ENCODE measurements at regions of chr1 and their contacts with region 1.

Region 1: DNA sequence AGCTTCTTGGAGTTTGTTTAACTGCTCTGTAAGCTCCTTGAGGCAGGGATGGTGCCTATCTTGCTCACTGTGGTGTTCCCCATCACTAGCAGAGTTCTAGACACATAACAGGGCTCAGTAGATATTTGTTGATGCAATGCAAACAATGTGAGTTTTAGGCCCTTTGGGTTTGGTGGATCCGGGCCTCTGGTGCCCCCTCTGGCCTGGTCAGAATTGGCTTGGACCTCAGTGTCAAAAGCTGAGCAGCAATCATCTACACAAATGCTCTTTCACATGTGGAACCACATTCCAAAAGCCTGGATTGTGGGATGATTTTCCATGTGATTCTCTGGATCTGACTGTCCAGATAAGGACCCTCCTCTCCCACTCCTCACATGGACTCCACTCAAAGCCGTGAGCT is 53.4 kb upstream of the BCAR3 start:
- DNase-seq: no peak
- H3K4me3 ChIP-seq: no peak overlapping the region
- CTCF ChIP-seq: peak; percentile 30

Region 2: DNA sequence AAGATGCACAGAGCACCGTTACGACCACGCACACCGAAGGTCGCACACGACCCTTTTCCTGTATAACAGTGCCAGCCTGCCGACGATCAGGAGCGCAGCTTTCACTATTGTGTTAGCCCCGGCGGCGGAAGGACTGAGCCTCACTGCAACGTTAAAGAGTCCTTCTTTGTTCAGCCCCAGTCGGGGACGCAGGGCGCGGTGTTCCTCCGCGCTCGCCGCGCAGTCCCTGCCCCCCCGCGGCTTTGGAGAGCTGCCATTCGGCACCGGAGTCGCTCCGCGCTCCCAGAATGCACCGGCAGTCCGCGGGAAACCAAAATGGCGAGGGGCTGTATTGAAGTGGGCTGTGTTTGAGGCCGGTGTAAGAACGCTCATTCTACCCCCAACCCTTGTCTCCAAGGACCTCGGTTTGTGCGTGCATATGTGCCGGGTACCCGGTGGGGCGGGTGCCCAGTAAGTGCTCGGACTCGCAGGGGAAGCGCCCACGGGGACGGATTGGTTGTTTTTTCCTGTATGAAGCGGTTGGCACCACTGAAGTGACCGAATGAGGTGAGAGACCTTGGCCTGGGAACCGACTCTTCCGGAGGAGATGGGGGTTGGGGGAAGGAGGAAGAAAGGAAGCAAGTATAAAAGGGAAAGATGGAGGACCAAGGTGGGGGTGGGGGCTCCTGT is 655.9 kb before region 1 on chr1 and contains the start of gene MTF2:
- CTCF ChIA-PET with region 1: no interaction called
- POLR2A ChIA-PET with region 1: no interaction called
- DNase-seq: peak; percentile 86
- H3K4me3 ChIP-seq: peak within 1 kb of the TSS; percentile 97
- CTCF ChIP-seq: no peak

Region 3: DNA sequence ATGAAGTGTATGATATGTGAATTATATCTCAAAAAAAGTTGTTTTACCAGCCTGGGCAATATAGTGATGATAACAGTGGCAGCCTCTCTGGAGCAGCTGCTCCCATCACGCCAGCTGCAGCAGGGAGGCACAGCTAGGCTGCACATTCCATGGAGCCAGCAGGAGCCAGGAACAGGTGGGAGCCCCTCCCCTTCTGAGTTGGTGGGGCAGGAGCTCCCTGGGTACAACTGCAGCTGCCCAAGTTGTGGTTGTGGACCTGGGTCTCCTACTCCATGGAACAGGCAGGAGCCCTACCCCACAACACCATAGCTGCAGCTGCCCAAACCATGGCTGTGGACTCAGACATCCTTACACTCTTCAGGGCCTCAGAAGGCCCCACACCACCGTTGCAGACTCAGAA is 308.8 kb before region 1 on chr1:
- CTCF ChIA-PET with region 1: no interaction called
- POLR2A ChIA-PET with region 1: no interaction called
- DNase-seq: no peak
- H3K4me3 ChIP-seq: no peak overlapping the region
- CTCF ChIP-seq: no peak

Region 4: DNA sequence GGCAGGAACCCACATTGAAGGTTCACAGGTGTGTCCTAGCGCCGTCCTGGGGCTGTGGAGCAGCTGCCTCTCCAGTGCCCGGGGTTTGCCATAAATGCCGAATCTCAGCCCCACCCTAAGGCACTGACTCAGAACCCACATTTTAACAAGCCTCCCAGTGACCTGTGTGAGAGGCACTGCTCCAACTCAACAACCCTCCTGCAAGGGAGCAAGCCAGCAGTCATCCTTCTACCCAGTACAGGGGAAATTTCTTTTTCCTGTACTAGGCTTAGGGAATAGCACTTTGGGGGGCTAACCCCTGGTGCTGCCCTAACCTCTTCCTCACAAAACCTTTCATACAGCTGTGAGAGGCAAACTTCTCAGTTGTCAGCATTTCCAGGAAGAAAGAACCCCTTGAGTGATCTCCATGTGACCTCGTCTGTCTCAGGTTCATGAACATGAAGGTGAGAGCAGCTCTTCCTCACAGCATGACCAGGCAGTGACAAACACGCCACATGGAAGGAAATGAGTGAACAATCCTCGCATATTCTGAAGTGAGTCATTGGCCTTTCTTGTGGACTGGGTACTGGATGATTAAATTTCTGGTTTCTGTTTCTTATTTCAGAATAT is 41.9 kb before region 1 on chr1:
- CTCF ChIA-PET with region 1: interaction called, 17 read pairs
- POLR2A ChIA-PET with region 1: interaction called, 5 read pairs
- DNase-seq: no peak
- H3K4me3 ChIP-seq: no peak overlapping the region; the same call in 1 of the 2 replicates
- CTCF ChIP-seq: no peak

Region 5: DNA sequence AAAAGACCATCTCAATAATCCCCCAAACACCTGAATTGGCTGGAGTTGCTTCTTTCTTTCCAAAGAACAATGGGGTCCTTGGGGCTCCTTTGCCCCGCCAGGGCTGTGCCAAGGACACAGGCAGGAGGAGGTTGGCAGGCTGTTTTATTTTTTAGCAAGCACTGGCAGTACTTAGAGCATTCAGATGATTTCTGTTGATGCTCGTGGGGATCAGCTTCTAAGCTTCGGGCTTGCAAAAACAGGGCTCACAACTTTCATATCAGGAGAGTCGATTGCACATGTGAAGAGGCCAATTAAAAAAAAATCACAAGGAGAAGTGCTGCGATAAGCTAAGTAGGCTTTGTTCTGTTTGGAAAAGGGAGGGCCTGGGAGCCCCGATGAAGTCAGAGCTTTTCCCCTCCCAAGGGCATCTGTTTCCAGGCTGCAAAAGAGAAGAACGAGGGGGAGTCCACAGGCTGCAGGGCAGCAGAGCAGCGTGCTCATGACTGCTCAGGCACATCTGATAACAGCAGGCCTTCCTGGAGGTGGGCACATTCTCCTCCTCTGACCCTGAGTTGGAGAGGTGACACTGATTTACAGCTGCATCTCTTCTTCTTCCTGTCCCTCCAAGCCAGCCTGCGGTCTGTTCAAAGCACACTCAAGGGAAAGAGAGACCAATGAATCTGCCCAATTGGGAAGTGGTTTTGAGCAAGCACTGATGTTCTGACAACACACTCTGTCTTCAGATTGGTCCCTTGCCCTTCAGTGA is 26.1 kb before region 1 on chr1:
- CTCF ChIA-PET with region 1: interaction called, 20 read pairs
- POLR2A ChIA-PET with region 1: interaction called, 4 read pairs
- DNase-seq: no peak
- H3K4me3 ChIP-seq: no peak overlapping the region
- CTCF ChIP-seq: no peak

Region 6: DNA sequence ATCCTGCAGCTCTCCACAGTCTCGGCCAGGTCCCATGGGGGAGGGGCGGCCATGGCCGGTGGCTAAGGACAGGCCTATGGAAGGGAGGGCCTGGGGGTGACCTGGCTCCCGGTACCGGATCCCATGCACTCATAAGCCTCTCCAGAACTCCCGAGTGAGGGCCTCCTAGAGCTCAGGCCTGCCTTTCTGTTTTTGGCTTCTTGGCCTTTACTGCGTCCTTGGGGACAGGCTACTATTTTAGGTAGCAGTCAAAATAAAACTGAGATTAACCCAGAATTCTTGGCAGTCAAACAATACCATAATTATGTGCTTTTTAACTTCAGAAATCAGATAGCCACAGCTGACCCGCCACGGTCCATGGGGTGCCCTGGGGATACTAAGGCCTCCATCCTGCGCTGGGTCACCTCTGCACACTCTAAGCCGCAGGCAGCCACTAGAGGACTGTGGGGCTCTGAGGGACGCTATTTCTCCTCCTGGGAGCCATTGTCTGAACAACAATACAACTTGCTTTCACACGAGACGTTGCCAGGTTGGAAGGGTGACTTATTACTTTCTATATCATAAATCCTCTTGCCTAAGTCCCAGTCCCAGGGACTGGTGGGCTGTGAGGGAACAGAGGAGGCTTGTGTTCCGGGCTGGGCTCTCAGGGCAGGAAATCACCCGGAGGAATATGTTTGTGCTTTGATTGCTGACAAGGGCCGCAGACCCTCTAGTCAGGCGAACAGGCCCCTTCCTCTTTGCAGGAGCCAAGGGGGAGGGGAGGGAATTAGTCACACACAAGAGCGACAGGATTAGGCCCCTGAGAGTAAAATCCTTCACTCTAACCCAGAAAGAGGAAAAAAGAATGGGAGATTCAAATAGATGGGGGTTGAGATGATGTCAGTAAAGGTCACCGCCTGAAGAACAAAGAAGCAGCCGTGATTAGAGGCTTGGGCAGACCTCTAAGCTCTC is 12.6 kb before region 1 on chr1:
- CTCF ChIA-PET with region 1: interaction called, 72 read pairs
- POLR2A ChIA-PET with region 1: no interaction called
- DNase-seq: no peak
- H3K4me3 ChIP-seq: no peak overlapping the region
- CTCF ChIP-seq: no peak

Region 7: GRCh38 chr1:93798301-93798700 is 63.3 kb after region 1 on chr1:
- CTCF ChIA-PET with region 1: interaction called, 13 read pairs
- POLR2A ChIA-PET with region 1: interaction called, 3 read pairs
- DNase-seq: no peak
- H3K4me3 ChIP-seq: no peak overlapping the region
- CTCF ChIP-seq: no peak

Measured in AG04449 (cell line).